ENCODE measurements at regions of chr17 and their contacts with region 1.

Region 1: GRCh38 chr17:56358651-56359050 is 205.4 kb downstream of the ANKFN1 start:
- DNase-seq: peak; percentile 39
- H3K27ac ChIP-seq: no peak overlapping the region
- CTCF ChIP-seq: no peak

Region 2: GRCh38 chr17:56760618-56761017 is 402.0 kb after region 1 on chr17:
- CTCF ChIA-PET with region 1: interaction called, 12 read pairs
- POLR2A ChIA-PET with region 1: no interaction called
- DNase-seq: no peak
- H3K27ac ChIP-seq: no peak overlapping the region
- CTCF ChIP-seq: no peak

Measured in RWPE1 (cell line).